Adrenal gland (tissue), 19 donors: ENCODE measurements at regions of chr1 and their contacts with region 1.

Region 1: GRCh38 chr1:66331657-66332547 is 202.1 kb upstream of the SGIP1 start:
- DNase-seq: peak; percentile 24 to 73 (median 38)
- H3K4me3 ChIP-seq: peak overlapping the region in 2 of 4 donors; percentile 5 to 56
- H3K27ac ChIP-seq: peak overlapping the region in 3 of 5 donors; percentile 26 to 82 (median 44)
- H3K4me1 ChIP-seq: peaks cover 0 to 12% of the 10 kb centered on the region in 2 donors
- H3K27me3 ChIP-seq: no peaks in the 10 kb centered on the region
- CTCF ChIP-seq: peak in 3 of 6 experiments; percentile 6 to 38 (median 25)
- POLR2A ChIP-seq: peak; percentile 26 to 36

Region 2: GRCh38 chr1:66396212-66396890 is 64.4 kb after region 1 on chr1:
- intact Hi-C with region 1: loop called in 1 of 2 experiments (anchors 10 kb)
- DNase-seq: no peak
- H3K4me3 ChIP-seq: no peak overlapping the region
- H3K27ac ChIP-seq: peak overlapping the region in 2 of 5 donors; percentile 26 to 38
- H3K4me1 ChIP-seq: peaks cover 0 to 5% of the 10 kb centered on the region in 2 donors
- H3K27me3 ChIP-seq: no peaks in the 10 kb centered on the region
- CTCF ChIP-seq: no peak
- POLR2A ChIP-seq: no peak

Region 3: DNA sequence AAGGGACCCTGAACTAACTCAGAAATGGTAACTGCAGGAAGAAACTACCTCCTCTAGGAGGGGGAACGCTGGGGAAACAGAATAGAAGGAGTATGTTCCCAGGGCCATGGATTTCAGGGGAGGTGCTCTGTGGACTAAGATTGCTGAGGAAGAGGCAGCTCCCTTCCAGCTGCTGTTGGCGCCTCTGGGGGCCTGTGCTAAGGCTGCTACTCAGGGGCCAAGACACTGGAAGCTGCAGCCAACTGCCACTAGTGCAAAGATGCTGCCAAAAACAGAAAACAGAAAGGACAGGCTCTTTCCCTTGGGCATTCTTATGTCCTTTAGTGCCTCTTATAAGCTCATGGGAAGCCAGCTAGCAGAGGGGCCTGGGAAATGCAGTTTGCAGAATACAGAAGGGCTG is 144.0 kb after region 1 on chr1:
- intact Hi-C with region 1: no loop called
- DNase-seq: no peak
- H3K4me3 ChIP-seq: no peak overlapping the region
- H3K27ac ChIP-seq: no peak overlapping the region
- H3K4me1 ChIP-seq: no peaks in the 10 kb centered on the region
- H3K27me3 ChIP-seq: peaks cover 7% of the 10 kb centered on the region
- CTCF ChIP-seq: no peak
- POLR2A ChIP-seq: no peak